Prostate gland (tissue), 2 donors: ENCODE measurements at regions of chr11 and their contacts with region 1.

Region 1: GRCh38 chr11:32792948-32793475 is 1.4 kb downstream of the CCDC73 start:
- DNase-seq: peak; percentile 53
- H3K4me3 ChIP-seq: no peak overlapping the region
- H3K27ac ChIP-seq: no peak overlapping the region
- H3K4me1 ChIP-seq: no peaks in the 10 kb centered on the region
- H3K27me3 ChIP-seq: no peaks in the 10 kb centered on the region
- CTCF ChIP-seq: peak; percentile 50 to 69 (median 66)
- POLR2A ChIP-seq: no peak

Region 2: DNA sequence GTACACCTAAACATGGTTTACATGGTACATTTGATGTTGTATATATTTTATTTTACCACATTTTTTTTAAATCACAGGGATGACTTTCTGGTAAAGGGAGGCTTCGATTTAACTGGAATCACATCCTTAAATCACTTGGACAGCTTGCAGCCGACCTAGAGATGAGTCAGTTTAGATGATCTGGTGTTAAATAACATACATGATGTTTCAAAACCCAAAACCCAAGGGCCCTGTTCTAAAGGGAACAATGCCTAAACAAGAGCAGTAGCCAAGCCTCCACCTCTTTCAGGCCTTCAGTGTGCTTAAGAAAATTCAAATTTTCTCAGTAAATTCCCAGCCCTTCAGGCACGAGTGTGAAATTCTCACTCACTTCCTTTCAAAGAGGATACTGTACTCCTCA is 466.5 kb before region 1 on chr11:
- intact Hi-C with region 1: loop called (anchors 5 kb)
- DNase-seq: no peak
- H3K4me3 ChIP-seq: no peak overlapping the region
- H3K27ac ChIP-seq: no peak overlapping the region
- H3K4me1 ChIP-seq: no peaks in the 10 kb centered on the region
- H3K27me3 ChIP-seq: no peaks in the 10 kb centered on the region
- CTCF ChIP-seq: no peak
- POLR2A ChIP-seq: no peak

Region 3: DNA sequence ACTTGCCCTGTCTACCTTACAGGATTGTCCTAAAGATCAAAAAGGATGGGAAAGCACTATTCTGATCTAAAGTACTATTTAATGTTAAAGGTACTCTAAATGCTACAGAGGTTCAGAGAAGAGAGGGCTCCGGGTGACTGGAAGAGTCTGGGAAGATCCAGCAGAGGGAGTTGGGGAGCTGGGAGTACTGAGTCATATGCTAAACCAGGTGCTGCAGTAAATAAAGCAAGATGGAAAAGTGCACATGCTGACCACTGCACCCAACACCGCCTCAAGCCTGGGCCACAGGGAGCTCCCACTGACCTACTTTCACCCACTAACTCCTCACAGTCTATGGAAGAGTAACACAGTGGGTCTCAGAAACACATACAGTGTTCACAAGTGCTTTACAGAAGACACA is 407.0 kb before region 1 on chr11:
- intact Hi-C with region 1: loop called (anchors 10 kb)
- DNase-seq: no peak
- H3K4me3 ChIP-seq: no peak overlapping the region
- H3K27ac ChIP-seq: no peak overlapping the region
- H3K4me1 ChIP-seq: no peaks in the 10 kb centered on the region
- H3K27me3 ChIP-seq: no peaks in the 10 kb centered on the region
- CTCF ChIP-seq: peak in 1 of 4 experiments; percentile 12
- POLR2A ChIP-seq: no peak

Region 4: DNA sequence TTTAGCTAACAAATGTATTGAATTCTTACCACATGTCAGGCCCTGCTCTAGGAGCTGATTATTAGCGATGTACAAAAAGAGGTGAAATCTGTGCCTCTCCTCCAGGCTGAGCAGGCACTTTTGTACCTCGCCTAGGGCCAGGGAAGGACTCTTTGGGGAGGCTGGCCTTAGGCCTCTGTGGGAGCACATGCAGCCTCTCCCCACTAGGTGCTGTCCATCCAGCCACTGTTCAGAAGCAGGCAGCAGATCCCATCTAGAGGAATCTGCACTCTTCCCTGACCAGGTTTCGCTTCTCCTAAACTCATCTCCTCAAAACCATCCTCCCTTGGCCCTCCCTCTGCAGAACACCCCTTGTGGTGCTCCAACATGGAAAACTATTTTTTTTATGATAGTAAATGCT is 305.7 kb before region 1 on chr11:
- intact Hi-C with region 1: no loop called
- DNase-seq: no peak
- H3K4me3 ChIP-seq: no peak overlapping the region
- H3K27ac ChIP-seq: no peak overlapping the region
- H3K4me1 ChIP-seq: no peaks in the 10 kb centered on the region
- H3K27me3 ChIP-seq: no peaks in the 10 kb centered on the region
- CTCF ChIP-seq: no peak
- POLR2A ChIP-seq: no peak

Region 5: GRCh38 chr11:32713496-32713895 is 79.5 kb before region 1 on chr11:
- intact Hi-C with region 1: no loop called
- DNase-seq: no peak
- H3K4me3 ChIP-seq: no peak overlapping the region
- H3K27ac ChIP-seq: no peak overlapping the region
- H3K4me1 ChIP-seq: no peaks in the 10 kb centered on the region
- H3K27me3 ChIP-seq: no peaks in the 10 kb centered on the region
- CTCF ChIP-seq: no peak
- POLR2A ChIP-seq: no peak

Region 6: DNA sequence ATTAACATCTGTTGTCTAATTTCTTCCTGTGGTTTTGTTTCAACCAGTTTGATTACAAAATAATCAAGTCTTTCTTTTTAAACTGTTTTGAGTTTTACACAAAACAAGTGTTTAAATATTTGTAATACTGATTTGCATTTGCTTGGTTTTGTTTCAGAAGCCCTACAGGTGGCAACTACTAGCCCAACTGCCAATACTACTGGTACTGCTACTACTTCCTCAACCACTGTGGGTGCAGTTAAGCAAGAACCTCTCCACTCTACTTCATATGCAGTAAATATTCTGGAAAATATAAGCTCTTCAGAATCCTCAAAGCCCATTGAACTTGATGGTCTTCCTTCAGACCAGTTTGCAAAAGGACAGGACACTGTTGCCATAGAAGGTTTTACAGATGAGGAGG is 160.7 kb after region 1 on chr11:
- intact Hi-C with region 1: no loop called
- DNase-seq: no peak
- H3K4me3 ChIP-seq: no peak overlapping the region
- H3K27ac ChIP-seq: no peak overlapping the region
- H3K4me1 ChIP-seq: no peaks in the 10 kb centered on the region
- H3K27me3 ChIP-seq: no peaks in the 10 kb centered on the region
- CTCF ChIP-seq: no peak
- POLR2A ChIP-seq: no peak